ENCODE measurements at regions of chr16 and their contacts with region 1.

Region 1: DNA sequence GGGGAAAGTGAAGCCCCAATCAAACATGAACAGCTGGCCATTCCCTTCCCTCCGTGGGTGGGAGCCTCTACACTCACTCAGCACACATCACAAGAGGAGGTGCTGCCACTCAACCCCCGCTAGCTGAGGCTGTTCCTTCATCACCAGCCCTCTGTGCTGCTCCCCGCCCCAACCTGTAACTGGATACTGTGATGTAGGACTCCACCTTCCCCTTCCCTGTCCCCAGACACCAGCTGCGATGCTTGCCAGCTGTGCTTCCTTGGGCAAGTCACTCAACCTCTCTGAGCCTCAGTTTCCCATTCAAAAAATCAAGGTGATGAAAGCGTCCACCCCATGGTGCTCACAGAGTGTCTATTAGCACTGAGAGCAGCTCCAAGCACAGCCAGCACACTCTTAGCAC is 273.2 kb downstream of the MRTFB start:
- DNase-seq: no peak
- ATAC-seq: no peak
- H3K4me3 ChIP-seq: no peak overlapping the region
- H3K4me3 Mint-ChIP-seq: no peak overlapping the region
- H3K27ac ChIP-seq: no peak overlapping the region
- H3K27ac Mint-ChIP-seq: no peak overlapping the region
- H3K4me1 ChIP-seq: no peaks in the 10 kb centered on the region
- H3K4me1 Mint-ChIP-seq: no peaks in the 10 kb centered on the region
- H3K27me3 ChIP-seq: peaks cover 0 to 4% of the 10 kb centered on the region in 2 experiments
- H3K27me3 Mint-ChIP-seq: peaks cover 0 to 8% of the 10 kb centered on the region in 2 donors

Region 2: DNA sequence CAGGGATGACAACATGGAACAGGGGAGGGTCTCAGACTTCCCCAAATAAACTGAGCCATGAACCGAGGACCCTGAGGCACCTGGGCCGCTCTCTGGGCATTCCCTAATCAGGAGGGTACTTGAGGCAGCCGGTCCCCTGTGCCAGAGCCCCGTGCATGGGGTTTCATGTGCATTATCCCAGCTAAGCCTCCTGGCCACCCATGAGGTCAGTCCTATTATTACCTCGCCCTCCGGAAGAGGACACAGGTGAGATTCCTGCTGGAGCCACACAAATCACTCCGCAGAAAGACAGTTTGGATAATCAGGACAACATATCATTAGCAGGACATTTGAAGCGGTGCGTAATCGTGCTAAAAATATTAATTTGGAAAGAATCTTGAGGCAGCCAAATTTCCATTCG is 11.8 kb after region 1 on chr16:
- CTCF ChIA-PET with region 1: interaction called in 1 of 2 experiments, 15 read pairs
- POLR2A ChIA-PET with region 1: interaction called in 1 of 2 experiments, 17 read pairs
- DNase-seq: no peak
- ATAC-seq: no peak
- H3K4me3 ChIP-seq: no peak overlapping the region
- H3K4me3 Mint-ChIP-seq: no peak overlapping the region
- H3K27ac ChIP-seq: no peak overlapping the region
- H3K27ac Mint-ChIP-seq: no peak overlapping the region
- H3K4me1 ChIP-seq: no peaks in the 10 kb centered on the region
- H3K4me1 Mint-ChIP-seq: peaks cover 8 to 10% (median 9%) of the 10 kb centered on the region in 3 donors
- H3K27me3 ChIP-seq: peaks cover 0 to 26% of the 10 kb centered on the region in 2 experiments
- H3K27me3 Mint-ChIP-seq: peaks cover 0 to 2% of the 10 kb centered on the region in 2 donors

Region 3: GRCh38 chr16:14486520-14487303 is 142.4 kb after region 1 on chr16:
- CTCF ChIA-PET with region 1: interaction called in 1 of 2 experiments, 11 read pairs
- POLR2A ChIA-PET with region 1: no interaction called
- DNase-seq: no peak
- ATAC-seq: no peak
- H3K4me3 ChIP-seq: no peak overlapping the region
- H3K4me3 Mint-ChIP-seq: no peak overlapping the region
- H3K27ac ChIP-seq: no peak overlapping the region
- H3K27ac Mint-ChIP-seq: no peak overlapping the region
- H3K4me1 ChIP-seq: peaks cover 2 to 9% of the 10 kb centered on the region in 2 experiments
- H3K4me1 Mint-ChIP-seq: peaks cover 22 to 31% (median 23%) of the 10 kb centered on the region in 3 donors
- H3K27me3 ChIP-seq: no peaks in the 10 kb centered on the region
- H3K27me3 Mint-ChIP-seq: no peaks in the 10 kb centered on the region

Measured in T-cell (primary cell).